ENCODE measurements at regions of chr17 and their contacts with region 1.

Region 1: GRCh38 chr17:51435641-51436091 is 175.3 kb downstream of the UTP18 start:
- DNase-seq: peak; percentile 71
- ATAC-seq: peak; percentile 68
- H3K4me3 Mint-ChIP-seq: peak overlapping the region; percentile 13
- H3K27ac Mint-ChIP-seq: no peak overlapping the region
- H3K4me1 Mint-ChIP-seq: peaks cover 37% of the 10 kb centered on the region
- H3K27me3 Mint-ChIP-seq: no peaks in the 10 kb centered on the region

Region 2: GRCh38 chr17:51351890-51352289 is 83.8 kb before region 1 on chr17:
- CTCF ChIA-PET with region 1: no interaction called
- POLR2A ChIA-PET with region 1: no interaction called
- intact Hi-C with region 1: no loop called
- DNase-seq: no peak
- ATAC-seq: no peak
- H3K4me3 Mint-ChIP-seq: no peak overlapping the region
- H3K27ac Mint-ChIP-seq: no peak overlapping the region
- H3K4me1 Mint-ChIP-seq: no peaks in the 10 kb centered on the region
- H3K27me3 Mint-ChIP-seq: no peaks in the 10 kb centered on the region

Region 3: GRCh38 chr17:51445946-51446533 is 10.4 kb after region 1 on chr17:
- CTCF ChIA-PET with region 1: interaction called, 11 read pairs
- POLR2A ChIA-PET with region 1: no interaction called
- intact Hi-C with region 1: no loop called
- DNase-seq: no peak
- ATAC-seq: no peak
- H3K4me3 Mint-ChIP-seq: no peak overlapping the region
- H3K27ac Mint-ChIP-seq: no peak overlapping the region
- H3K4me1 Mint-ChIP-seq: peaks cover 5% of the 10 kb centered on the region
- H3K27me3 Mint-ChIP-seq: no peaks in the 10 kb centered on the region

Region 4: DNA sequence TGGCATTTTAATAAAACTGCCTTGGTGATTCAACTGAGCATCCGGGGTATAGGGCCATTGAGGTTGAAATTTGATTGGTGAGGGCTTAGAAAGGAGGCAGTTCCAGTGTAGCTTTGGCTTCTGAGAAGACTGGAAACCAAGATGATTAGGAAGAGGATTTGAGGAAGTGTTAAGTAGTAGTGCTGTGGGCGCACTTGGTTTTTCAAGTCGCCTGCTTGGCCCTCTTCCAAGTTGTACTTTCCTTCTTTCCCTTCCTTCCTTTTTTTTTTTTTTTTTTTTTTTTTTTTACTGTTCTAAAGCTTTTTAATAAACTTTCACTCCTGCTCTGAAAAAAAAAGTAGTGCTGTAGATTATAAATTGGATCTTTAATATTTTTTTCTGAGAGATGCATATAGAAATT is 145.2 kb after region 1 on chr17:
- CTCF ChIA-PET with region 1: no interaction called
- POLR2A ChIA-PET with region 1: no interaction called
- intact Hi-C with region 1: no loop called
- DNase-seq: no peak
- ATAC-seq: no peak
- H3K4me3 Mint-ChIP-seq: no peak overlapping the region
- H3K27ac Mint-ChIP-seq: no peak overlapping the region
- H3K4me1 Mint-ChIP-seq: no peaks in the 10 kb centered on the region
- H3K27me3 Mint-ChIP-seq: peaks cover 8% of the 10 kb centered on the region